PC-9 (cell line): ENCODE measurements at regions of chr7 and their contacts with region 1.

Region 1: GRCh38 chr7:17815318-17815717 is 125.0 kb downstream of the SNX13 start:
- DNase-seq: no peak
- H3K4me3 ChIP-seq: no peak overlapping the region
- H3K27ac ChIP-seq: peak overlapping the region; percentile 3; the same call in 1 of the 2 replicates
- H3K4me1 ChIP-seq: no peaks in the 10 kb centered on the region
- H3K27me3 ChIP-seq: no peaks in the 10 kb centered on the region
- CTCF ChIP-seq: no peak

Region 2: GRCh38 chr7:17680943-17681351 is 134.4 kb before region 1 on chr7:
- CTCF ChIA-PET with region 1: interaction called, 22 read pairs
- POLR2A ChIA-PET with region 1: no interaction called
- intact Hi-C with region 1: no loop called
- DNase-seq: peak in 1 of 2 experiments; percentile 60
- H3K4me3 ChIP-seq: no peak overlapping the region
- H3K27ac ChIP-seq: no peak overlapping the region
- H3K4me1 ChIP-seq: no peaks in the 10 kb centered on the region
- H3K27me3 ChIP-seq: no peaks in the 10 kb centered on the region
- CTCF ChIP-seq: peak; percentile 91